ENCODE measurements at regions of chr10 and their contacts with region 1.

Region 1: GRCh38 chr10:110898391-110898790 is 20.6 kb downstream of the BBIP1 start:
- DNase-seq: no peak
- H3K4me3 Mint-ChIP-seq: no peak overlapping the region
- H3K27ac Mint-ChIP-seq: no peak overlapping the region
- H3K4me1 Mint-ChIP-seq: peaks cover 24% of the 10 kb centered on the region
- H3K27me3 Mint-ChIP-seq: no peaks in the 10 kb centered on the region

Region 2: GRCh38 chr10:110918643-110919363 is 20.4 kb after region 1 on chr10 and contains the start of gene BBIP1:
- CTCF ChIA-PET with region 1: interaction called, 11 read pairs
- POLR2A ChIA-PET with region 1: interaction called, 4 read pairs
- DNase-seq: no peak
- H3K4me3 Mint-ChIP-seq: peak within 1 kb of the TSS; percentile 97
- H3K27ac Mint-ChIP-seq: peak within 1 kb of the TSS; percentile 96
- H3K4me1 Mint-ChIP-seq: peaks cover 33% of the 10 kb centered on the region
- H3K27me3 Mint-ChIP-seq: no peaks in the 10 kb centered on the region
- total RNA-seq, gene BBIP1: 19.1 to 24.2 TPM

Measured in activated CD4-positive, alpha-beta T cell treated with anti-CD3 and anti-CD28 coated beads, Interleukin-2, amount 10 ng/mL, durations not matched to agents 7 days and 5 days (primary cell).